ENCODE measurements at regions of chr11 and their contacts with region 1.

Region 1: GRCh38 chr11:86456052-86456939 is 81.6 kb downstream of the CCDC81 start:
- DNase-seq: peak; percentile 40 to 58 (median 51)
- H3K4me3 ChIP-seq: no peak overlapping the region
- H3K4me3 Mint-ChIP-seq: peak overlapping the region in 1 of 8 donors; percentile 53
- H3K27ac ChIP-seq: no peak overlapping the region
- H3K27ac Mint-ChIP-seq: peak overlapping the region in 1 of 7 donors; percentile 58
- H3K4me1 ChIP-seq: no peaks in the 10 kb centered on the region
- H3K4me1 Mint-ChIP-seq: peaks cover 1 to 7% (median 6%) of the 10 kb centered on the region in 4 donors
- H3K27me3 ChIP-seq: no peaks in the 10 kb centered on the region
- H3K27me3 Mint-ChIP-seq: no peaks in the 10 kb centered on the region

Region 2: GRCh38 chr11:86444981-86445380 is 11.3 kb before region 1 on chr11:
- CTCF ChIA-PET with region 1: interaction called, 15 read pairs
- POLR2A ChIA-PET with region 1: no interaction called
- intact Hi-C with region 1: no loop called
- DNase-seq: no peak
- H3K4me3 ChIP-seq: no peak overlapping the region
- H3K4me3 Mint-ChIP-seq: no peak overlapping the region
- H3K27ac ChIP-seq: no peak overlapping the region
- H3K27ac Mint-ChIP-seq: no peak overlapping the region
- H3K4me1 ChIP-seq: no peaks in the 10 kb centered on the region
- H3K4me1 Mint-ChIP-seq: peaks cover 0 to 5% (median 2%) of the 10 kb centered on the region in 4 donors
- H3K27me3 ChIP-seq: no peaks in the 10 kb centered on the region
- H3K27me3 Mint-ChIP-seq: peaks cover 0 to 1% of the 10 kb centered on the region in 2 donors

Region 3: DNA sequence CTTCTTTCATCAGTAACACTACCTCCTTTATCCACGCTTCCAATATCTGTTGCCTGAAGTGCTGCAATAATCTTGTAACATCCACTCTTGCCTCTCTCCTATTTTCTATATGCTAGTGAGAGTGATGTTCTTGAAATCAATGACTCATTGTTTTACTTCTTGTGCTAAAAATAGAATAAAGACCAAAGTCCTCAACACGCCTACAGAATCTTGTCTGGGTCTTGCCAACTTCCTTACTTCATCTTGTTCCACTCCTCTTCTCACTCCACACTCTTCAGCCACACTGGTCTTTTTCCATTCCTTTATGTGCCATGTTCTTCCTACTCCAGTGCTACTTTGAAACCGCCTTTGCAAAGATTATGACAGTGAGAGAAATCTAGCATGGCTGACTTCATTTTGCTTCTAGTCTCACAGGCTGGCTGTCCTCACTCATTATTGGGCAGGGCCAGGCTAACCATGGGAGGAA is 54.8 kb after region 1 on chr11:
- CTCF ChIA-PET with region 1: no interaction called
- POLR2A ChIA-PET with region 1: no interaction called
- intact Hi-C with region 1: no loop called
- DNase-seq: no peak
- H3K4me3 ChIP-seq: no peak overlapping the region
- H3K4me3 Mint-ChIP-seq: no peak overlapping the region
- H3K27ac ChIP-seq: no peak overlapping the region
- H3K27ac Mint-ChIP-seq: no peak overlapping the region
- H3K4me1 ChIP-seq: no peaks in the 10 kb centered on the region
- H3K4me1 Mint-ChIP-seq: no peaks in the 10 kb centered on the region
- H3K27me3 ChIP-seq: no peaks in the 10 kb centered on the region
- H3K27me3 Mint-ChIP-seq: no peaks in the 10 kb centered on the region

Region 4: DNA sequence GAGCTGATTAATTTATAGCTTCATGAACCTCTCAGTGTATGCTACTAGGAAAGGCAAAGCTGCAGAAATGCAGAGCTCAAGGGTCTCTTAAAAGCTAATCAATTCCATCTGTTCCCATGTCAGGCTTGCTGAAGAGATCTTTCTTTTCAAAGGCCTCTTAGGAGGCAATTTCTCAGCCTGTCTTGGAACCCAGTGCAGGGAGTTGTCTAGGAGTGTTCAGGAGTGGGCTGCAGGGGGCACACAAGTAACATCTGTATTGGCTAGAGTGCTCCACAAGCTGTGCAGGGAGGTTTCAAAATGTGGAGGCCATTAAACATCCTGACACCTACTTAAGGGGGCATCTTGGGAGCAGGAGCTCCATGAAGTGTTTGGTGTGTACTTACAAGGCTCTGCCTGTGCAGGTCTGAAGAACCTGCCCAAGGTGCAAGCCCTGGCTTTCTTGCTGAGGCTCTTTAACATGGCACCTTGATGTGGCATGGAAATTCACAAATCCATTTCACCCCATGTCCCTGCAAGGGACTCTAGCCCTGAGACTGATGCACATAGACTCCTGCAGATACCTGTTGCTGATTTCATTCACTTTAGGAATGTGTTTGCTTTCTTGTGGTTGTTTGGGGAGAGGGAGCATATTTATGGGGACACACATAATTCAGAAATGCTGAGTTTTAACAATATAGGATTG is 81.4 kb after region 1 on chr11:
- CTCF ChIA-PET with region 1: no interaction called
- POLR2A ChIA-PET with region 1: no interaction called
- intact Hi-C with region 1: no loop called
- DNase-seq: no peak
- H3K4me3 ChIP-seq: no peak overlapping the region
- H3K4me3 Mint-ChIP-seq: no peak overlapping the region
- H3K27ac ChIP-seq: no peak overlapping the region
- H3K27ac Mint-ChIP-seq: no peak overlapping the region
- H3K4me1 ChIP-seq: no peaks in the 10 kb centered on the region
- H3K4me1 Mint-ChIP-seq: no peaks in the 10 kb centered on the region
- H3K27me3 ChIP-seq: no peaks in the 10 kb centered on the region
- H3K27me3 Mint-ChIP-seq: peaks cover 0 to 1% of the 10 kb centered on the region in 2 donors

Region 5: DNA sequence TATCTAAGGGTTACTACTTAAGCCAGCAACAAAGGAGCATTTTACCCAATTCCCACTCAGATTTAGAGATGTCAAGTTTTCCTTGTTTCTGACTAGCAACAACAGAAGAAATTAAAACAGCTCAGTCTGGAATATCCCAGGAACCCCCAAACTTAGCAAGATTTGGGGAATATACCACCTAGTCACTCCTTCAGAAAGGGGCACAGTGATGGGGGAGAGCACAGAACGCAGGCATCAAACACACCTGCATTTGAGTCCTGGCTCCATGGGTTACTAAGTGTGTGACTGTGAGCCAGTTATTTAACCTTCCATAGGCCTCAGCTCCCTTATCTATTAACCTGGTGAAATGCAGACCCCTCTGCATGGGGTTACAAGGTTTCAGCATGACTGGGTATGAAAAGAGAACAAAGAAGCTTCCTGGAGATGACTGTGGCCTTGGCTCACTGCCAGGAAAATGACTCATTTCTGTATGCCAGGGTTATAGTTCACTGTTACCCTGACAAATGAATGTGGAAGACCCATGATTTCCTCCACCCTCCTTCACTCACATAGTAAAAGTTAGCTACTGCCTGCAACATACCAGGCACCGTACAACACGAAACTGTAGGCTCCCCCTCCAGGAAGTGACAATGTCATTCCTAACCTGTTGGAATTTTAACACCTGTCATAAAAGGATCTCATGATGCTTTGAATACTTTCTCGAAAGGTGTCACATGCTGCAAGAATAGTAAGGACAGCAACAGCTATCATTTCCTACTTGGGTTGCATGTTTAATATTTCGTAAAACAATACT is 136.6 kb after region 1 on chr11:
- CTCF ChIA-PET with region 1: no interaction called
- POLR2A ChIA-PET with region 1: no interaction called
- intact Hi-C with region 1: no loop called
- DNase-seq: peak; percentile 28 to 53 (median 37)
- H3K4me3 ChIP-seq: no peak overlapping the region
- H3K4me3 Mint-ChIP-seq: no peak overlapping the region
- H3K27ac ChIP-seq: no peak overlapping the region
- H3K27ac Mint-ChIP-seq: peak overlapping the region in 2 of 7 donors; percentile 52 to 56
- H3K4me1 ChIP-seq: peaks cover 11% of the 10 kb centered on the region
- H3K4me1 Mint-ChIP-seq: peaks cover 5 to 13% (median 9%) of the 10 kb centered on the region in 4 donors
- H3K27me3 ChIP-seq: no peaks in the 10 kb centered on the region
- H3K27me3 Mint-ChIP-seq: peaks cover 1 to 3% of the 10 kb centered on the region in 2 donors

Region 6: DNA sequence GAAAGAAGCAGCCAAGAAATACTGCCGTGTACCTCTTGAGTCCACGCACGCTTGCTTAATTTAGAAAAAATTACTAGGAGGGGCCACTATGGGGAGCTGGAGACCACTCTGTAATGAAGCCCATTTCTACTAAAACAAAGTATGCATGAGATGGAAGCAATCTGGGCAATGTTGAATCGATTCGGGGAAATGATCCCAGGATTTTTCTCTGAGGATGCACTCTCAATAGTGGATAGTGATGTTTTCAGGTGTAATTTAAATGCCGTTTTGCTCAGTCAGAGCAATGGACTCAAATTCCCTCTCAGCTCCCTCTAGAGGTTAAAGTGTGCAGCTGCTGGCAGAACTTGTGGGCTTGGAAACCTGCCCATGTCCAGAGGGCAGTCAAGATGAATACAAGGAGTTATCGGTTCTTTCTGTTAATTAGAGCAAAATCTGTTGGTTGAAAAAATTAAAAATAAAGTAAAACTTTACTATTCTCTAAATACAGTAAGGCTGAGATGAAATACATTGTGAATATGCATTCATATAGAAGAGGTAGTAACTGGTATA is 152.0 kb after region 1 on chr11:
- CTCF ChIA-PET with region 1: interaction called, 3 read pairs
- POLR2A ChIA-PET with region 1: no interaction called
- intact Hi-C with region 1: loop called (anchors 1 kb)
- DNase-seq: peak in 4 of 5 donors; percentile 13 to 26 (median 21)
- H3K4me3 ChIP-seq: no peak overlapping the region
- H3K4me3 Mint-ChIP-seq: no peak overlapping the region
- H3K27ac ChIP-seq: no peak overlapping the region
- H3K27ac Mint-ChIP-seq: no peak overlapping the region
- H3K4me1 ChIP-seq: no peaks in the 10 kb centered on the region
- H3K4me1 Mint-ChIP-seq: peaks cover 0 to 1% (median 0%) of the 10 kb centered on the region in 4 donors
- H3K27me3 ChIP-seq: no peaks in the 10 kb centered on the region
- H3K27me3 Mint-ChIP-seq: peaks cover 0 to 2% of the 10 kb centered on the region in 2 donors

Region 7: GRCh38 chr11:86816251-86816726 is 360.0 kb after region 1 on chr11:
- CTCF ChIA-PET with region 1: interaction called, 17 read pairs
- POLR2A ChIA-PET with region 1: no interaction called
- intact Hi-C with region 1: no loop called
- DNase-seq: no peak
- H3K4me3 ChIP-seq: no peak overlapping the region
- H3K4me3 Mint-ChIP-seq: no peak overlapping the region
- H3K27ac ChIP-seq: no peak overlapping the region
- H3K27ac Mint-ChIP-seq: no peak overlapping the region
- H3K4me1 ChIP-seq: no peaks in the 10 kb centered on the region
- H3K4me1 Mint-ChIP-seq: peaks cover 0 to 3% (median 1%) of the 10 kb centered on the region in 4 donors
- H3K27me3 ChIP-seq: no peaks in the 10 kb centered on the region
- H3K27me3 Mint-ChIP-seq: peaks cover 3 to 15% of the 10 kb centered on the region in 2 donors